HCT116 (cell line): ENCODE measurements at regions of chr3 and their contacts with region 1.

Region 1: DNA sequence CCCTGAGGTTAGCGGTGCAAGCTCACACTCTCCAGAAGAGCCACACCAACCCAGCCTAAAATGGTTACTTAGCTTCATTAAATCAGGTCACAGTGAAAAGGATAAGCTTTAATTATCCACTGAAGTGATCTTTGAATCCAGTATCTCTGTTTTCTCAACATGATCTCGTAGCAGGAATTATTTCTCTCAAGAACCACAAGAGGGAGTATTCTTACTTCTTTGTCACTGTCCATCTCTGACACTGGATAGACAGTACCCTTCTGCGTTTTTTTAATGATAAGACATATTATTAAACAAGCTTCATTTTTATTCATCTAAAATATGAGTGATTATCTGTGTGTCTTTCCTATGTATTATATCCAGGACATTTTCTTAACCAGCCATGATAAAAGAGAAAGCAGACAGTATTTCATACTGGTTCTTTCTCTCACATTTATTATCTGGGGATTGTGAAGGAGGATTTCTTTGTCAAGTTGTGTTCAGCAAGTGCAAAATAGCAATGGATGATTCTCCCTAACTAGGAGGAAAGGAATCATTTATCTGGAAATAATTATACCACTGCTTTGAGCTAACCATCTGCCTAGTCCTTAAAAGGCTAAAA is 105.4 kb upstream of the CCDC54 start:
- DNase-seq: peak; percentile 19
- ATAC-seq: peak; percentile 84
- H3K4me3 ChIP-seq: no peak overlapping the region
- H3K27ac ChIP-seq: no peak overlapping the region
- H3K4me1 ChIP-seq: no peaks in the 10 kb centered on the region
- H3K27me3 ChIP-seq: no peaks in the 10 kb centered on the region
- CTCF ChIP-seq: peak; percentile 58 to 82 (median 73)
- POLR2A ChIP-seq: no peak
- RAD21 ChIP-seq: peak; percentile 81

Region 2: GRCh38 chr3:107421170-107421792 is 149.4 kb after region 1 on chr3:
- CTCF ChIA-PET with region 1: interaction called, 43 read pairs
- POLR2A ChIA-PET with region 1: no interaction called
- RAD21 ChIA-PET with region 1: interaction called, 7 to 8 read pairs
- intact Hi-C with region 1: no loop called
- DNase-seq: peak; percentile 67
- ATAC-seq: peak; percentile 92
- H3K4me3 ChIP-seq: peak overlapping the region; percentile 26 to 48
- H3K27ac ChIP-seq: no peak overlapping the region
- H3K4me1 ChIP-seq: no peaks in the 10 kb centered on the region
- H3K27me3 ChIP-seq: no peaks in the 10 kb centered on the region
- CTCF ChIP-seq: peak; percentile 61 to 72 (median 63); a peak in 5 of 6 replicates
- POLR2A ChIP-seq: no peak
- RAD21 ChIP-seq: peak; percentile 65

Region 3: DNA sequence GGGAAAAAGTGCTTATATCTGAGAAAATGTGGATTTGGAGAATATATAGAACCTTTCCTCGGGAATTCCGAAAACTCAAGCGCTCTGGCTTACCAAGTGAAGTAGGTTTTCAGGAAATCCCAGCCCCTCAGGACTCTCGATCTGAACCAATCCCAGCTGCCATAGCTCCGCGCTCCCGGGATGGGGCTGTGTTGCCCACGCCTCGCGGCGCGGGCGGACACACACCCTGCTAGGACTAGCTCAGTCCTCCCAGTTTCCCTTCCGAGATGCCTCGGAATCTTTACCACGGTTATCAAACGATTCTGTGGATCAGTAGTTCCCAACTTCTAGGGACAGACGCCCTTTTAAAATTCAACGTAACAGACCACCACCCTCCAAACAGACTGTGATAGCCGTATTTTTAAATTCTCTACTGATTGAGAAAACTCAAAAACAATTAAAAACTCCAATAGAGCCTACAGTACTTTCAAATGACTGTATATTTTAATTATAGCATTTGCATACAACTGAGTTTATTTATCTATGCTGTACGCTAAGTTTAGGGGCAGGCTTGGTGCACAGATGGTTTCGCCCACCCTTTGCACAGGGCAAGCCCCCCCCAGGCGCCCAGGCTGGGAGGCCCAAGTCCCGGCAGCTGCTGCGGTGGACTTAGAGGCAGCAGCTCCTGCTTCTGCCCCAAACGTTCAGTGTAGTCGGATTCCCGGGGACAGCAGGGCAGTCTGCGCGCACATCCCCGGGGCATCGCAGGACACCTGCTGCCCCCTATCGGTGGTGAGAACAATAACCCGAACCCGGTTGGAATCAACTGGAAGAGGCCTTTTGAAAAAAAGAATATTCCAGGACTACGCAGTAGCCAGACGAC is 157.7 kb after region 1 on chr3:
- CTCF ChIA-PET with region 1: interaction called, 26 read pairs
- POLR2A ChIA-PET with region 1: no interaction called
- RAD21 ChIA-PET with region 1: no interaction called
- intact Hi-C with region 1: loop called (anchors 5 kb)
- DNase-seq: peak; percentile 67
- ATAC-seq: peak; percentile 87
- H3K4me3 ChIP-seq: 0 out of 4 replicates have a peak overlapping the region, but pooled peaks of 1 of the 2 experiments have one; percentile 10
- H3K27ac ChIP-seq: no peak overlapping the region
- H3K4me1 ChIP-seq: peaks cover 5 to 33% of the 10 kb centered on the region in 2 experiments; a peak in 3 of 4 replicates
- H3K27me3 ChIP-seq: no peaks in the 10 kb centered on the region
- CTCF ChIP-seq: peak; percentile 61 to 93 (median 86)
- POLR2A ChIP-seq: no peak
- RAD21 ChIP-seq: peak; percentile 74

Region 4: DNA sequence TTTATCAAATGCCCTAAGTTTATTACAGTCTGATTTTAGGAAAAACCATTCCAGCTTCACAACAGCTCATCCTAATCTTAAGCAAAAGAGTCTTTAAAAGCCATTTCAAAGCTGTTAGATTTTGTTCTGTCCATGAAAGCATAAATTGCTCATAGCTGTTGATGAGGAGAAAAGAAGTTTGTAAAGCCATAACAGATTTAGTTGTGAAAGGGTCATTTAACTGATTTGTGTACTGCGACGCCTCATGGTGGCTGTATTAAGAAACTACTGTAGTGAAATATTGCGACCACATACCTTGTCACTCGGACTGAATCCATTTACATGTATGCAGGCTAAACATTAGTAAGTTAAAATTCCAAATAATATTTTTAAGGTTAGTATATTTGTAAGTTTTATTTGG is 271.8 kb after region 1 on chr3:
- CTCF ChIA-PET with region 1: interaction called, 10 read pairs
- POLR2A ChIA-PET with region 1: no interaction called
- RAD21 ChIA-PET with region 1: no interaction called
- intact Hi-C with region 1: loop called (anchors 1 kb)
- DNase-seq: no peak
- ATAC-seq: peak; percentile 46; the same call in 1 of the 2 replicates
- H3K4me3 ChIP-seq: no peak overlapping the region
- H3K27ac ChIP-seq: no peak overlapping the region
- H3K4me1 ChIP-seq: no peaks in the 10 kb centered on the region
- H3K27me3 ChIP-seq: no peaks in the 10 kb centered on the region
- CTCF ChIP-seq: peak; percentile 19 to 60 (median 32); a peak in 3 of 6 replicates
- POLR2A ChIP-seq: no peak
- RAD21 ChIP-seq: peak; percentile 58

Region 5: GRCh38 chr3:107775974-107776373 is 504.1 kb after region 1 on chr3:
- CTCF ChIA-PET with region 1: no interaction called
- POLR2A ChIA-PET with region 1: no interaction called
- RAD21 ChIA-PET with region 1: no interaction called
- intact Hi-C with region 1: no loop called
- DNase-seq: no peak
- ATAC-seq: no peak
- H3K4me3 ChIP-seq: no peak overlapping the region
- H3K27ac ChIP-seq: no peak overlapping the region
- H3K4me1 ChIP-seq: no peaks in the 10 kb centered on the region
- H3K27me3 ChIP-seq: no peaks in the 10 kb centered on the region
- CTCF ChIP-seq: no peak
- POLR2A ChIP-seq: no peak
- RAD21 ChIP-seq: no peak